Activated B cell treated with CpG ODN at 0.5 μM for 24 hours (primary cell): ENCODE measurements at regions of chr3 and their contacts with region 1.

Region 1: GRCh38 chr3:72163809-72164634 is 379.1 kb upstream of the PROK2 start:
- DNase-seq: peak; percentile 53
- ATAC-seq: peak; percentile 87
- H3K4me3 Mint-ChIP-seq: peak overlapping the region; percentile 64
- H3K27ac Mint-ChIP-seq: peak overlapping the region; percentile 81
- H3K4me1 Mint-ChIP-seq: peaks cover 52% of the 10 kb centered on the region
- H3K27me3 Mint-ChIP-seq: peaks cover 2% of the 10 kb centered on the region
- CTCF ChIP-seq: no peak

Region 2: DNA sequence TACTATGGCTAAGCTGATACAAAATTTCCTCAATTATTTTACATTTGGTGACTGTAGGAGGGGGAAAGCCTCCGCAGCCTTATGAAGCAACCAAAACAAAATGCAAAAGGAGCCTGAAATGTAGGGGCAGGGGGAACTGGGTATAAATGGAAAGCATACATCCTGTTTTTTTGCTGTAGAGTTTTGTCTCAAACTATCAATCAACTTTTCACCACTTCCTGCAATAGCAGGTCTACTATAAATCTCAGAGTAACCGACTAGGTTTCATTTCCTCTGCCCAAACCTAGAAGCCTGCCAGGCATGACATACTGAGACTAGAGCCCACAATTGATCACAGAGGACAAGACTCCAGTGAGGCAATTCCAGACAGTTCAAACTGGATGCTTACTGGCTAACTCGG is 592.9 kb after region 1 on chr3:
- CTCF ChIA-PET with region 1: no interaction called
- POLR2A ChIA-PET with region 1: no interaction called
- intact Hi-C with region 1: loop called (anchors 5 kb)
- DNase-seq: no peak
- ATAC-seq: peak; percentile 99
- H3K4me3 Mint-ChIP-seq: peak overlapping the region; percentile 67
- H3K27ac Mint-ChIP-seq: no peak overlapping the region
- H3K4me1 Mint-ChIP-seq: peaks cover 32% of the 10 kb centered on the region
- H3K27me3 Mint-ChIP-seq: peaks cover 33% of the 10 kb centered on the region
- CTCF ChIP-seq: no peak